ENCODE measurements at regions of chr5 and their contacts with region 1.

Region 1: DNA sequence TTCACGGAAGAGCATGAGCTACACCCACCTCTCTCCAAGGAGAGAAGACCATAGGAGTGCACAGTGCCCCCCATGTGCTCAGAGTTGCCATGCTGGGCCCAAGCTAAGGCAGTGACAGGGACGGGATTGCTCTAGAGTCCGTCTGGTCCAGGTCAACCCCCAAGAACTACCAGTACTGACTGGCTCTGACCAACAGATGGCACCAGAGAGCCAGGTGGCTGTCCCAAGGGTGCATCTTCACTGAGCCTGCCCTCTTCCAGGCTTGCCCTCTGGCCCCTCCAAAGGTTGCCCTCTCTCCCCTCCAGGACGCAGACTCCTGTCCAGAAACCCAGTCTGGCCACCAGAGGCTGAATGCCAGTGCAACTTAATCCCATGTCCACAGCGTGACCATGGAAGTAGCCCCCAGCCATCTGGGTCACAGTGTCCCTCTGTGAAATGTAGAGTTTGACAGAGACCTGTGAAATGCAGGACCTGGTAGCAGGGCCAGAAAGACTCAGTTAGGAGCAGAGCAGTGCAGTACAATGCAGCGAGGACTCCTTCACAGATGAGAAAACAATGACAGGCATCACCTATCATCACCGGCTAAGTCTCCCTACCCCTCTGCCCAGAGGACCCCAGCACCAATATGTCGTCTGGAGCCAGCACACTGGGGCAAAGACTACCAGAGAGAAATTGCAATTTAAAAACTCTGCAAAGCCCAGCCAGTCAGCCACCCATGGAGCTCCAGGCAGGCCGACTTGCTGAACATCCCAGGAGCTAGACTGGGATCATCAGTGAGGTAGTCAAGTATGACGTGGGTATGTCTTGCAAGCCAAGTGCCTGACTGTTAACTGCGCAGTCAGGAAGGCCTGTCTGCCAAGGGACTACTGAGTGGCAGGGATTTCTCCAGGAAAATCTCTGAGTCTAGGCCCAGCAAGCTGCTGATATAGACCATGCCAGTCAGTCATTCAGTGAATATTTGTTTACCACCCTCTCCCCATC is 7.7 kb upstream of the SKP1 start:
- DNase-seq: peak; percentile 81
- ATAC-seq: peak; percentile 99
- H3K4me3 Mint-ChIP-seq: no peak overlapping the region
- H3K27ac Mint-ChIP-seq: no peak overlapping the region
- H3K4me1 Mint-ChIP-seq: no peaks in the 10 kb centered on the region
- H3K27me3 Mint-ChIP-seq: no peaks in the 10 kb centered on the region
- CTCF ChIP-seq: peak; percentile 87

Region 2: DNA sequence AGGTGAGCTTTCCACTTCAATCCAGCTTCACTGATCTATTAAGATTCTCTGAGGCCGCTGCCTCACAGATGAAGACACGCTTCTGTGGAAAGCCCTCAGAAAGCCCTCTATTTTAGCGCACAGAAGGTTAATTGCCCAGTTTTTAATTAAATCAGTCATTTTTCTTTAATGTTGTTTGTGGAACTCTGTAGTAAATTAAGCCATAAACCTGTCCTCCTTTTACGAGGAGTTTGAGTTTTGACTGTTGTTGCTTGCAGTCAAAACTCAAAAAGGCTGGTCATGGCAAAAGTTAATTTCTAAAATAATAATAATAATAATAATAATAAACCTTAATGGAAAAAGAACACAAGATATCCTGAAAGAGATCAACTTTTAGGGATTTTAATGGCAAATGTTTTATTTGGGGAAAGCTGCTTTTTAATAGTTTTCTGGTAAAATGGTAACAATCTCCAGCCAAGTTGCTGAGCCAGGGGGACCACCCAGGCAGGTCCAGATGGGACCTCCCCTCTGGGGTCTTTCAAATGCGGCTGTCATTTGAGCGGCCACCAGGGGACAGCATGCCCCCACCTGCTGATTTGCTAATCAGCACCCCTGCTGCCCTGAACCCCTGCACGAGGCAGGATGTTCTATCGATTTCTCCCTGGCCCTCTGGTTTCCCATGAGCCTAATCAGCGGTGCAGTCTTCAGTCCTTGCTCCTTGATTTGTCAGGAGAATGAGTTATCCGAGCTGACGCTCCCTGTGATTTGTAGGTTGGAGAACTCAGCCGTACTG is 819.3 kb before region 1 on chr5:
- CTCF ChIA-PET with region 1: no interaction called
- POLR2A ChIA-PET with region 1: no interaction called
- intact Hi-C with region 1: no loop called
- DNase-seq: peak; percentile 57
- ATAC-seq: no peak
- H3K4me3 Mint-ChIP-seq: no peak overlapping the region
- H3K27ac Mint-ChIP-seq: no peak overlapping the region
- H3K4me1 Mint-ChIP-seq: no peaks in the 10 kb centered on the region
- H3K27me3 Mint-ChIP-seq: peaks cover 2% of the 10 kb centered on the region
- CTCF ChIP-seq: peak; percentile 71

Region 3: GRCh38 chr5:133801955-133802751 is 382.3 kb before region 1 on chr5:
- CTCF ChIA-PET with region 1: no interaction called
- POLR2A ChIA-PET with region 1: no interaction called
- intact Hi-C with region 1: no loop called
- DNase-seq: no peak
- ATAC-seq: no peak
- H3K4me3 Mint-ChIP-seq: no peak overlapping the region
- H3K27ac Mint-ChIP-seq: no peak overlapping the region
- H3K4me1 Mint-ChIP-seq: no peaks in the 10 kb centered on the region
- H3K27me3 Mint-ChIP-seq: peaks cover 6% of the 10 kb centered on the region
- CTCF ChIP-seq: no peak

Region 4: GRCh38 chr5:134195666-134196065 is 11.2 kb after region 1 on chr5:
- CTCF ChIA-PET with region 1: interaction called, 26 read pairs
- POLR2A ChIA-PET with region 1: interaction called, 3 read pairs
- intact Hi-C with region 1: no loop called
- DNase-seq: no peak
- ATAC-seq: no peak
- H3K4me3 Mint-ChIP-seq: no peak overlapping the region
- H3K27ac Mint-ChIP-seq: no peak overlapping the region
- H3K4me1 Mint-ChIP-seq: no peaks in the 10 kb centered on the region
- H3K27me3 Mint-ChIP-seq: no peaks in the 10 kb centered on the region
- CTCF ChIP-seq: no peak

Region 5: GRCh38 chr5:134209477-134210240 is 25.2 kb after region 1 on chr5:
- CTCF ChIA-PET with region 1: interaction called, 20 read pairs
- POLR2A ChIA-PET with region 1: no interaction called
- intact Hi-C with region 1: no loop called
- DNase-seq: no peak
- ATAC-seq: no peak
- H3K4me3 Mint-ChIP-seq: no peak overlapping the region
- H3K27ac Mint-ChIP-seq: peak overlapping the region; percentile 9
- H3K4me1 Mint-ChIP-seq: peaks cover 53% of the 10 kb centered on the region
- H3K27me3 Mint-ChIP-seq: no peaks in the 10 kb centered on the region
- CTCF ChIP-seq: no peak

Region 6: GRCh38 chr5:134215757-134216156 is 31.3 kb after region 1 on chr5:
- CTCF ChIA-PET with region 1: interaction called, 20 read pairs
- POLR2A ChIA-PET with region 1: no interaction called
- intact Hi-C with region 1: no loop called
- DNase-seq: no peak
- ATAC-seq: no peak
- H3K4me3 Mint-ChIP-seq: no peak overlapping the region
- H3K27ac Mint-ChIP-seq: peak overlapping the region; percentile 58
- H3K4me1 Mint-ChIP-seq: peaks cover 68% of the 10 kb centered on the region
- H3K27me3 Mint-ChIP-seq: no peaks in the 10 kb centered on the region
- CTCF ChIP-seq: no peak

Region 7: DNA sequence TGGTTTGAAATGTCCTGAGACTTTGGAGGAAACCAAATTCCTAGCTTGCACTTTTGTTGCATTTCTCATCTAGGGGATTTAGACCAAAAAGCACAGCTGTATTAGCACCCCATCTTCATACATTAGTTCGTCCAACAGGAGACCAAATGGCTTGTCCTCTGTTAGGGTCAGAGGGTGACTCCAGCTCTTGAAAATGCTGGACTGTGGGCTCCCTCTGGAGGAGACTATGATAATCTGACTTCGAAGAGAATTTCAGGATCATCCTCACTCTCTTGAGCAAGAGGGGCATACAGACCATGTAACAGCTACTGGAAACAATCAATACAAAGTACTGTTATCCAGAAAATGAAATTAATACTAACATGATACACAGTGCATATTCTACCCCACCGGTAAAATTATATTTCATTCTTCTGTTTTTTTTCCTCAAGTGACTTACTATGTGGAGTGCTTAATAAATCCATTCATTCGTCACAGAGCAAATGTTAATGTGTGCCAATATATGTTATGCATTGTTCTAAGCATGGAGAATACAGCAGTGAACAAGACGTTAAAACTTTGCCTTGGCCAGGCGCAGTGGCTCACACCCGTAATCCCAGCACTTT is 105.2 kb after region 1 on chr5:
- CTCF ChIA-PET with region 1: interaction called, 69 read pairs
- POLR2A ChIA-PET with region 1: no interaction called
- intact Hi-C with region 1: loop called (anchors 2 kb)
- DNase-seq: peak; percentile 55
- ATAC-seq: peak; percentile 77
- H3K4me3 Mint-ChIP-seq: no peak overlapping the region
- H3K27ac Mint-ChIP-seq: no peak overlapping the region
- H3K4me1 Mint-ChIP-seq: peaks cover 4% of the 10 kb centered on the region
- H3K27me3 Mint-ChIP-seq: peaks cover 5% of the 10 kb centered on the region
- CTCF ChIP-seq: peak; percentile 70